Common myeloid progenitor, CD34-positive (primary cell): ENCODE measurements at regions of chr22 and their contacts with region 1.

Region 1: DNA sequence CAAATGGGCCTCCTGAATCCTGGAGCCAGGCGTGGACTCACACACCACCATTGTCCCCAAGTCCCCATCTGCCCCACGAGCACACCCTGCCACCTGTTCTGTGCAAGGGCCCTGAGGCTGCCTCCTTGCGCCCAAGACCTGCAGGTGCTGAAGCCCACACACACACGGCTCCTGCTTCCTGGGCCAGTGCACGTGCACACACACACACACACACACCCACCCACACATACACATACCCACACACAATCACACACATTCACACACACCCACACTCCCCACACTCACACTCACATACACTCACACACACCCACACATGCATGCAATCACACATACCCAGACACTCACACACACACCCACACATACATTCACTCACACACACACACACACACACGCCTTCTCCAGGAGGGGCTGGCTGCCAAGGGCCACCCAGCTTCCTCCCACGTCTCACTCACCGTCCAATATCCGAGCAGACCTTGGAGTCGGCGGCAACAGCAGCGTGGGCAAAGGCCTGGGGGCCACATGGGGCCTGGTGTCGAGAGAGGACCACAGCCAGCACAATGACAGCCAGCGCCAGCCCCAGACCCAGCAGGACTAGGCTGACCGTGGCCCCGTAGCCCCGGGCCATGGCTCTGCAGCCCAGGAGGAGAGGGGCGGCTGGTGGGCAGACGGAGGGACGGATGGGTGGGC is 638 bp downstream of the GGT5 start:
- DNase-seq: peak; percentile 8 to 47 (median 35)
- H3K4me3 ChIP-seq: peak overlapping the region in 1 of 7 experiments; percentile 62
- H3K27ac ChIP-seq: no peak overlapping the region
- H3K4me1 ChIP-seq: peaks cover 0 to 66% (median 36%) of the 10 kb centered on the region in 4 experiments
- H3K27me3 ChIP-seq: no peaks in the 10 kb centered on the region

Region 2: GRCh38 chr22:24189249-24190158 is 54.7 kb before region 1 on chr22:
- CTCF ChIA-PET with region 1: interaction called, 25 read pairs
- POLR2A ChIA-PET with region 1: interaction called, 5 read pairs
- DNase-seq: peak; percentile 31 to 62 (median 50)
- H3K4me3 ChIP-seq: peak overlapping the region in 1 of 7 experiments; percentile 51
- H3K27ac ChIP-seq: no peak overlapping the region
- H3K4me1 ChIP-seq: peaks cover 0 to 8% (median 2%) of the 10 kb centered on the region in 4 experiments
- H3K27me3 ChIP-seq: no peaks in the 10 kb centered on the region